ENCODE measurements at regions of chr20 and their contacts with region 1.

Region 1: GRCh38 chr20:54219751-54220426 is 12.0 kb downstream of the PFDN4 start:
- H3K4me3 ChIP-seq: no peak overlapping the region
- H3K27ac ChIP-seq: no peak overlapping the region
- H3K4me1 ChIP-seq: no peaks in the 10 kb centered on the region
- CTCF ChIP-seq: no peak

Region 2: DNA sequence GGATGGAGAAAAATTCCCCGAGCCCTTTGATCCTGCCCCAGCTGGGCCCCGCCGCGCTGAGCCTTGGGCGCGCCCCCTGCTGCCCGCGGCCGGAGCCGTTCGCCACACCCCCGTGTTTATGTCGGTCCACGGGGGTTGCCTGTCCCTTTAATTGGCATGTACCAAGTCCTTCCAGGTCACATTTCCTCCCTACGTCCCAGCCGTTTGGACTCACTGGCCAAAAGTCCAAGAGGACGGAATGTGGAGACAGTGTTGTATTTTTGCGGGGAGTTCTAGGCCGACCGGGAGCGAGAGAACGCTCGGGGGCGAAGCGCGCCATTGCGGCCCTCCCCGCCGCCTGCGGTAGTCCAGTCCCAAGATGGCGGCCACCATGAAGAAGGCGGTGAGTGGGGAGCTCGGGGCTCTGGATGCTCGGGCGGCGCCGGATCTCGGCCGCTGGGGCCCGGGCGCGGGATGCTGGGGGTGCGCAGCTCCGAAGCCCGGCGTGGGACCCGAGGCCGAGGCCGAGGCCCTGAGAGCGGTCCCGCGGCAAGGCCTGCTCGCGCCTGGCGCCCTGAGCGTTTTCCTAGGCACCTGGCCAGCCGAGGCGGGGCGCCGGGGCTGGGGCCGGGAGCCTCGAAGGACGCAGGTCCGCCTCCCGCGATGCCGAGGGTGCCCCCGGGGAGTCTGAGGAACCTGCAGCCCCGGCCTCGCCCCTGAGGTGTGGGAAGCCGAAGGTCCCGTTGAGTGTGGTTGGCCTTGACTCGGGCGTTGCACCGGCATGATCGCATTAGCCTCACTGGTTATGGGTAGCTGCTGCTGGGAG is 11.9 kb before region 1 on chr20 and contains the start of gene PFDN4:
- CTCF ChIA-PET with region 1: interaction called, 11 read pairs
- POLR2A ChIA-PET with region 1: no interaction called
- H3K4me3 ChIP-seq: peak within 1 kb of the TSS; percentile 92
- H3K27ac ChIP-seq: peak within 1 kb of the TSS; percentile 97
- H3K4me1 ChIP-seq: no peaks in the 10 kb centered on the region
- CTCF ChIP-seq: peak; percentile 96

Region 3: GRCh38 chr20:54645451-54646155 is 425.7 kb after region 1 on chr20:
- CTCF ChIA-PET with region 1: interaction called, 12 read pairs
- POLR2A ChIA-PET with region 1: no interaction called
- H3K4me3 ChIP-seq: no peak overlapping the region
- H3K27ac ChIP-seq: no peak overlapping the region
- H3K4me1 ChIP-seq: no peaks in the 10 kb centered on the region
- CTCF ChIP-seq: no peak

Measured in HEK293 (cell line).